Panc1 (cell line): ENCODE measurements at regions of chr1 and their contacts with region 1.

Region 1: GRCh38 chr1:174769961-174770549 is 229.7 kb upstream of the CACYBP start:
- DNase-seq: peak; percentile 28
- ATAC-seq: no peak
- H3K4me3 ChIP-seq: no peak overlapping the region
- H3K27ac ChIP-seq: no peak overlapping the region
- H3K4me1 ChIP-seq: no peaks in the 10 kb centered on the region
- H3K27me3 ChIP-seq: no peaks in the 10 kb centered on the region
- CTCF ChIP-seq: peak; percentile 72; the same call in 1 of the 2 replicates

Region 2: GRCh38 chr1:174982971-174983689 is 213.1 kb after region 1 on chr1:
- CTCF ChIA-PET with region 1: no interaction called
- POLR2A ChIA-PET with region 1: no interaction called
- in situ Hi-C with region 1: no loop called
- intact Hi-C with region 1: loop called (anchors 1 kb)
- DNase-seq: no peak
- ATAC-seq: no peak
- H3K4me3 ChIP-seq: no peak overlapping the region
- H3K27ac ChIP-seq: no peak overlapping the region
- H3K4me1 ChIP-seq: no peaks in the 10 kb centered on the region
- H3K27me3 ChIP-seq: no peaks in the 10 kb centered on the region
- CTCF ChIP-seq: peak; percentile 76

Region 3: GRCh38 chr1:174999216-174999925 is 229.3 kb after region 1 on chr1:
- CTCF ChIA-PET with region 1: no interaction called
- POLR2A ChIA-PET with region 1: no interaction called
- in situ Hi-C with region 1: no loop called
- intact Hi-C with region 1: loop called (anchors 1 kb)
- DNase-seq: peak; percentile 99
- ATAC-seq: peak; percentile 94
- H3K4me3 ChIP-seq: peak overlapping the region; percentile 82 to 99
- H3K27ac ChIP-seq: peak overlapping the region; percentile 100
- H3K4me1 ChIP-seq: peaks cover 23% of the 10 kb centered on the region
- H3K27me3 ChIP-seq: no peaks in the 10 kb centered on the region
- CTCF ChIP-seq: no peak